ENCODE measurements at regions of chr7 and their contacts with region 1.

Region 1: GRCh38 chr7:24979863-24980533 is at the start of gene OSBPL3:
- DNase-seq: peak; percentile 96
- ATAC-seq: peak; percentile 90
- H3K4me3 Mint-ChIP-seq: peak within 1 kb of the TSS; percentile 83
- H3K27ac Mint-ChIP-seq: peak within 1 kb of the TSS; percentile 89
- H3K4me1 Mint-ChIP-seq: peaks cover 53% of the 10 kb centered on the region
- H3K27me3 Mint-ChIP-seq: no peaks in the 10 kb centered on the region
- CTCF ChIP-seq: peak; percentile 7
- total RNA-seq, gene OSBPL3: 44.6 to 45.7 TPM

Region 2: DNA sequence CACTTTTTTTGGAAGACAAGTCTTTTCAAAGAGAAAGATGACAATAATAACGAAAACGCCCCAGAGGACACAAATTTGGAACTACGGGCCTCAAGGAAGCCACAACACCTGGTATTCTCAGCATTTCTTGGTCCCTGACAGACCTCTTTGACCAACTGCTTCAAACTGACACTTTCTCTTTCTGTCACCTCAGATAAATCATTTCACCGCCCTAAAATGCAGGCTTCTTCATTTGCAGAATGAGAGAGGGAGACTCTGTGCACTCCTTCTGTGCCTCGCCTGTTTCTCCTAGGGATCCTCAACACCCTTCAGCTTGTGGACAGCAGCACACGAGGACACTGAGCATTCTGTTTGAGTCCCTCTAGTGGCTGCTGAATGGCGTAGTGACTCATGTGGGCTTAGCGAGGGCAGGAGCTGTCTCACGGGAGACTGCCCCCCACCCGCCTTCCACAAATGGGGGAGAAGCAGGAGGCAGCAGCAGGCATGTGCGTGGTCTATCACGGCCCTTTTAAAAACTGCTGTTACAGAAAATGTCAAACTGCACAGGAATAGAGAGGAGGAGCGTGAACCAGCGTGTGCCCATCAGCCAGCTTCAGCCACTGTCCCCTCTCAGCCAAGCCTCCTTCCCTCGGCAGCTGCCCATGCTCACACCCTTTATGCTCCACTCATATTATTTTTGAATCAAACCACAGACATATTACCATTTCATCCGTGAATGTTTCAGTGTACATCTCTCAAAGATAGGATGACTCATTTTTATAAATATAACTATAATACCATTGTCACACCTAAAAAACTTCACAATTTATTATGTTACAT is 264.1 kb before region 1 on chr7:
- CTCF ChIA-PET with region 1: no interaction called
- POLR2A ChIA-PET with region 1: no interaction called
- intact Hi-C with region 1: no loop called
- DNase-seq: peak; percentile 28
- ATAC-seq: peak; percentile 70
- H3K4me3 Mint-ChIP-seq: no peak overlapping the region
- H3K27ac Mint-ChIP-seq: no peak overlapping the region
- H3K4me1 Mint-ChIP-seq: peaks cover 6% of the 10 kb centered on the region
- H3K27me3 Mint-ChIP-seq: peaks cover 34% of the 10 kb centered on the region
- CTCF ChIP-seq: peak; percentile 41

Region 3: GRCh38 chr7:24866004-24866615 is 113.9 kb before region 1 on chr7:
- CTCF ChIA-PET with region 1: interaction called, 10 read pairs
- POLR2A ChIA-PET with region 1: interaction called, 8 read pairs
- intact Hi-C with region 1: no loop called
- DNase-seq: peak; percentile 76
- ATAC-seq: peak; percentile 90
- H3K4me3 Mint-ChIP-seq: peak overlapping the region; percentile 30
- H3K27ac Mint-ChIP-seq: peak overlapping the region; percentile 90
- H3K4me1 Mint-ChIP-seq: peaks cover 41% of the 10 kb centered on the region
- H3K27me3 Mint-ChIP-seq: no peaks in the 10 kb centered on the region
- CTCF ChIP-seq: no peak

Region 4: DNA sequence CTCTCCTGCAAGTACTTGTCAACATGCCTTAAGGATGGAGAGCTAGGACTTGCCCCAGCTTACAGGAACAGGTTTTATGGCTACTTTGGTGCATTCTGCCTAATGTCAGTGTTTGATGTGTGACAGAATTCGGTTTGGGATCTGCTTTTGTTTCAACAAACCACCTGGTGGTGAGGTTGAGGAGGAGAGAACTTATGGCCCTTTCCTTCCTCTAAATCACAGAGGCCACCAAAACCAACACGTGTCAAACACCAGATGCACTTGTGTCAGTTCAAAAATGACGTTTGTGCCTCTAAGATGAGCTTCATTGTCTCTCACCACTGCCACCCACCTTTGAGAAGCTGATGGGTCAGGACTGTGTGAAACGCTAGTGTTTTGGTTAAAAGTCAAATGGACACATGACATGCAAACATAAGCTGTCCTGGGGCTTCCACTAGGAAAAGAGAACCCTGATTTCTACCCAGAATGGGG is 83.9 kb before region 1 on chr7:
- CTCF ChIA-PET with region 1: interaction called, 10 read pairs
- POLR2A ChIA-PET with region 1: interaction called, 3 read pairs
- intact Hi-C with region 1: no loop called
- DNase-seq: peak; percentile 54
- ATAC-seq: peak; percentile 76
- H3K4me3 Mint-ChIP-seq: no peak overlapping the region
- H3K27ac Mint-ChIP-seq: no peak overlapping the region
- H3K4me1 Mint-ChIP-seq: peaks cover 61% of the 10 kb centered on the region
- H3K27me3 Mint-ChIP-seq: no peaks in the 10 kb centered on the region
- CTCF ChIP-seq: no peak

Region 5: GRCh38 chr7:24965831-24966709 is 13.9 kb before region 1 on chr7:
- CTCF ChIA-PET with region 1: interaction called, 28 read pairs
- POLR2A ChIA-PET with region 1: interaction called, 25 read pairs
- intact Hi-C with region 1: loop called (anchors 2 kb)
- DNase-seq: peak; percentile 68
- ATAC-seq: peak; percentile 87
- H3K4me3 Mint-ChIP-seq: peak overlapping the region; percentile 6
- H3K27ac Mint-ChIP-seq: peak overlapping the region; percentile 48
- H3K4me1 Mint-ChIP-seq: peaks cover 77% of the 10 kb centered on the region
- H3K27me3 Mint-ChIP-seq: no peaks in the 10 kb centered on the region
- CTCF ChIP-seq: no peak

Region 6: GRCh38 chr7:25093268-25093826 is 113.3 kb after region 1 on chr7:
- CTCF ChIA-PET with region 1: interaction called, 16 read pairs
- POLR2A ChIA-PET with region 1: no interaction called
- intact Hi-C with region 1: no loop called
- DNase-seq: peak; percentile 91
- ATAC-seq: peak; percentile 90
- H3K4me3 Mint-ChIP-seq: no peak overlapping the region
- H3K27ac Mint-ChIP-seq: no peak overlapping the region
- H3K4me1 Mint-ChIP-seq: peaks cover 13% of the 10 kb centered on the region
- H3K27me3 Mint-ChIP-seq: peaks cover 2% of the 10 kb centered on the region
- CTCF ChIP-seq: peak; percentile 83

Region 7: DNA sequence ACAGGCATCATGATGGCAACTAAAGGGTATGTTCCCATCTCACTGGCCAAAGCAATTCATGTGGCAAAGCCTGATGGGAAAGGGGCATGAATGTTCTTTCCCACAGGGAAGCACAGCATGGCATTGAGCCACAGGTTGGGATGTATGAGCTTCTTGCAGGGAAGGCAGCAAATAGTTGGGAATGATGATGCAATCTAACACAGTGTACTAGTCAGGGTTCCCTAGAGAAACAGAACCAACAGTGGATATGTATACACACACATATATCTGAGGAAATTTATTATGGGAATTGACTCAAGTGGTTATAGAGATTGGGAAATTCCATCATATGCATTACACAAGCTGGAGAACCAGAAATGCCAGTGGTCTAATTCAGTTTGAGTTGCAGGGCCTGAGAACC is 501.9 kb after region 1 on chr7:
- CTCF ChIA-PET with region 1: no interaction called
- POLR2A ChIA-PET with region 1: no interaction called
- intact Hi-C with region 1: no loop called
- DNase-seq: no peak
- ATAC-seq: no peak
- H3K4me3 Mint-ChIP-seq: no peak overlapping the region
- H3K27ac Mint-ChIP-seq: no peak overlapping the region
- H3K4me1 Mint-ChIP-seq: no peaks in the 10 kb centered on the region
- H3K27me3 Mint-ChIP-seq: no peaks in the 10 kb centered on the region
- CTCF ChIP-seq: no peak

Measured in activated CD8-positive, alpha-beta T cell treated with anti-CD3 and anti-CD28 coated beads for 36 hours (primary cell).